WTC11 (cell line): ENCODE measurements at regions of chr6 and their contacts with region 1.

Region 1: DNA sequence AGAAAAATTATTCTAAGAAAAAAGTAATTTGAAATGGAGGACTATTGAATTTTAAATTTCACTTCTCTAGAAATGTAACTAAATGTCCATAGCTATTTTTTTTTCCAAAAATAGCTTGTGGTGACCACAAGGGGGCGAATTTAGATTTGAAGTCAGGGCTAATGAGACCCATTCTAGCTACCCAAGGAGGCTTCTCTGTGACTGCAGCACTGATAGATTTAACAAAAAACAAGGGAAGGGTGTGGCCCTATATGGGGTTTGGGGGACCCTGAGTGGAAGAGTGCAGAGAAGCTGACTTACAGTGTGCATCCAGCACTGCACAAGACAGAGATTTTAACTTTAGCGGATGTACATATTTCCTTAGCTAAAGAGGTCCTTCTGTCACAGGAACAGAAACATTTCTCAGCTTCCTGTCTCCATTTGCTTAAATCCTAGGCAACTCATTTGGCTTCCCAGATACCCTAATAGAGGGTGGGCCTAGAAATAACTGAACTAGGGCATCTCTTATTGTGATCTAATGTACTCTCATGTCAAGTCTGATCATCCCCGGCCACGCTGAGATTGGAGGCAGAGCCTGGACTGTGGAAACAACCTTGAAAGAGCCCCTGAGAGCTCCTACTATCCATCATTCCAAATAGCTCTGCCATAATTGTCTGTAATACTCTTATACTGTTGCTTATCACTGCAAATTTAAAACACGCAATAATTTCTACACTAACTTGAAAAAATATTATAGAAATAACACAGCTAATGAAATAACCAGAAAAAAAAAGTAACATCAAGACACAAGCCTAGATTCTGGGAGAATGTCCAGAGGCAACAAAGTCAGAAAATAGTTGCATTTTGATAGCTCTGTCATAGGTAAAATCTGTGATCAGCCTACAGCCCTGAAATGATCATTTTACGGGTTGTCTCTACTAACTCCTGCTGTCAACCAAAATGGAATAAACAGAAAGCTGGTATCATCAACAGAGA is 93.6 kb downstream of the SNAP91 start:
- DNase-seq: no peak
- ATAC-seq: peak; percentile 90
- H3K4me3 Mint-ChIP-seq: no peak overlapping the region
- H3K27ac Mint-ChIP-seq: no peak overlapping the region
- H3K4me1 Mint-ChIP-seq: no peaks in the 10 kb centered on the region; the same call in 1 of the 2 replicates
- H3K27me3 Mint-ChIP-seq: no peaks in the 10 kb centered on the region
- CTCF ChIP-seq: 0 out of 2 replicates have a peak, but pooled peaks have one; percentile 59

Region 2: GRCh38 chr6:83597051-83597450 is 18.3 kb before region 1 on chr6:
- CTCF ChIA-PET with region 1: interaction called, 23 read pairs
- POLR2A ChIA-PET with region 1: no interaction called
- DNase-seq: no peak
- ATAC-seq: no peak
- H3K4me3 Mint-ChIP-seq: no peak overlapping the region
- H3K27ac Mint-ChIP-seq: no peak overlapping the region
- H3K4me1 Mint-ChIP-seq: peaks cover 5% of the 10 kb centered on the region
- H3K27me3 Mint-ChIP-seq: no peaks in the 10 kb centered on the region
- CTCF ChIP-seq: no peak

Region 3: GRCh38 chr6:83633149-83633548 is 17.8 kb after region 1 on chr6:
- CTCF ChIA-PET with region 1: interaction called, 14 read pairs
- POLR2A ChIA-PET with region 1: no interaction called
- DNase-seq: no peak
- ATAC-seq: peak; percentile 42
- H3K4me3 Mint-ChIP-seq: no peak overlapping the region
- H3K27ac Mint-ChIP-seq: no peak overlapping the region
- H3K4me1 Mint-ChIP-seq: peaks cover 19% of the 10 kb centered on the region
- H3K27me3 Mint-ChIP-seq: no peaks in the 10 kb centered on the region
- CTCF ChIP-seq: no peak

Region 4: DNA sequence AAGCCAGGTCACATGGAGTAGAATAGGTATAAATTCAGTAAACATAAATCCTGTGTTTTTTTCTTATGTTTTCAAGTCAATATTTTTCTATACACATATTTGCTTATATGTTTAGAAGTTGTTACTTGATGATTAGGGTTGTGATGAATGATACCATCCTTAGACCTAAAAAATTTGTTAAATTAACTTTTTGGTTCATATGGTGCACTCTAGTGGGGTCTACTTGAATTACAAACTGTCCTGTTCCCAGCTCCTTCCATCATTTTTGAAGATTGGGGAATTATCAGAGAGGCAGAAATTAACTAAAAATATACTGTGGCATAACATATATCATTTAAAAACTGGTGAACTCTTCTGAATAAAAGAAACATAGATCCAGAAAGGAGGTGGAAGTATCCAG is 189.6 kb after region 1 on chr6:
- CTCF ChIA-PET with region 1: interaction called, 18 read pairs
- POLR2A ChIA-PET with region 1: no interaction called
- DNase-seq: no peak
- ATAC-seq: peak; percentile 43
- H3K4me3 Mint-ChIP-seq: no peak overlapping the region
- H3K27ac Mint-ChIP-seq: no peak overlapping the region
- H3K4me1 Mint-ChIP-seq: peaks cover 6% of the 10 kb centered on the region
- H3K27me3 Mint-ChIP-seq: peaks cover 5% of the 10 kb centered on the region; the same call in 1 of the 2 replicates
- CTCF ChIP-seq: no peak